ENCODE measurements at regions of chr15 and their contacts with region 1.

Region 1: DNA sequence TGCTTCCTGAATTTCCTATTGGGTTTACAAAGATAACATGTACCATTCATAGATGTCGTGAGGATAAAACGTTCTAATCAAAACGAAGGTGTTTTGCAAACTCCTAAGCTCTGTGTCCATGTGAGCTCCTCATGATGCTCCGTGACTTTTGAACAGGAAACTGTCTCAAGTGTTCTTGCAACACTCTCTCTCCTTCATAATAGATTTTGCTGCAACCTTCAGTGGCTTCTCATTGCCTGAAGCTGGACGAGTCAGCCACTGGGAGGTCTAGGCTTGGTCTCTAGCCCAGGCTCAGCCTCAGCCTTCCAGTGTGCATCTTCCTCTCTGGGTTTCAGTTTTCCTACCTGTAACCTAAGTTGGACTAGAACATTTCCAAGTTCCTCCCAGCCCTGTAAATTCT is 18.7 kb upstream of the BCL2A1 start:
- DNase-seq: no peak
- ATAC-seq: no peak
- H3K4me3 ChIP-seq: no peak overlapping the region
- H3K27ac ChIP-seq: peak overlapping the region in 1 of 10 donors; percentile 52
- H3K4me1 ChIP-seq: peaks cover 0 to 20% (median 0%) of the 10 kb centered on the region in 9 donors
- H3K27me3 ChIP-seq: peaks cover 0 to 4% (median 0%) of the 10 kb centered on the region in 7 donors
- CTCF ChIP-seq: no peak

Region 2: DNA sequence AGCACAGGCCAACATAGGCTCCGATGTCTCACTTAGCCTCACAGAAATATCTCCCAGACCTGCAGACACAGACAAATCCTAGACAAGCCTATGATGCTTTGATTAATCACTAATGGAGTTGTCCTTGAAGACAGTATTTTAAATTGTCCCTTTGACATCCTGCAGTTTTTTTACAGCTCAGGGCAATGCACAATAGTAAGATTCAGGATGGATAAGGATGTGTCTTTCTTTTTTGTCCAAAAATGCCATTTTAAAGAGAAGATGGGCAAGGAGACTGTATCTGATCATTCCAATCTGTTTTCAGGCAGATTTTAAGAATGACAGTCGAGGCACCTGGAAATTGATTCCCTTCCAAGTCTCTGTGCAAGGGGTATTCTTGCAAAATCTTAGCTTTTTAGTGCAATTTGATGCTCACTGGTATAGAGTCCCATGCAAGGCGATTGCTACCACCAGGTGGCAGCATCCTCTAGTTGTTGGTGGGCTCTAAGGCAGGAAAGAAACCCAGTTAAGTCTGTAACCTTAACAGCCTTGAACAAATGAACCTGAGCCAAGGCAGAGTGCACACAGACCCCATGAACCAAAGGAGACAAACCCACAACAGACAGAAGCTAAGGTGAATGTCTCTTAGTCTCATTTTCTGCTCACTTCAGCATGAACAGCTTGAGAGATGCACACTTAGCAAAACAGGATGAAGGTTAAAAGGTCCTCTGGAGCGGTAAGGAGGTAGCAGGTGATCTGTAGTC is 608.8 kb before region 1 on chr15:
- intact Hi-C with region 1: loop called in 9 of 10 experiments (anchors 2 to 10 kb)
- DNase-seq: peak; percentile 60 to 73
- ATAC-seq: peak; percentile 73 to 89 (median 80)
- H3K4me3 ChIP-seq: no peak overlapping the region
- H3K27ac ChIP-seq: no peak overlapping the region
- H3K4me1 ChIP-seq: no peaks in the 10 kb centered on the region
- H3K27me3 ChIP-seq: no peaks in the 10 kb centered on the region
- CTCF ChIP-seq: peak; percentile 80 to 93 (median 90)

Region 3: GRCh38 chr15:79769069-79769481 is 220.6 kb before region 1 on chr15:
- intact Hi-C with region 1: loop called in 1 of 10 experiments (anchors 10 kb)
- DNase-seq: no peak
- ATAC-seq: no peak
- H3K4me3 ChIP-seq: no peak overlapping the region
- H3K27ac ChIP-seq: no peak overlapping the region
- H3K4me1 ChIP-seq: no peaks in the 10 kb centered on the region
- H3K27me3 ChIP-seq: peaks cover 0 to 8% (median 0%) of the 10 kb centered on the region in 7 donors
- CTCF ChIP-seq: peak in 6 of 9 donors; percentile 17 to 39 (median 32)

Region 4: GRCh38 chr15:79853458-79854328 is 136.0 kb before region 1 on chr15:
- intact Hi-C with region 1: no loop called
- DNase-seq: peak; percentile 14 to 48
- ATAC-seq: peak; percentile 61 to 91 (median 85)
- H3K4me3 ChIP-seq: no peak overlapping the region
- H3K27ac ChIP-seq: no peak overlapping the region
- H3K4me1 ChIP-seq: no peaks in the 10 kb centered on the region
- H3K27me3 ChIP-seq: no peaks in the 10 kb centered on the region
- CTCF ChIP-seq: peak; percentile 80 to 97 (median 93)

Region 5: GRCh38 chr15:79896637-79897379 is 92.9 kb before region 1 on chr15 and contains the start of gene MTHFS:
- intact Hi-C with region 1: loop called in 5 of 10 experiments (anchors 2 to 10 kb)
- DNase-seq: peak; percentile 75 to 82
- ATAC-seq: peak; percentile 96 to 99 (median 97)
- H3K4me3 ChIP-seq: peak within 1 kb of the TSS; percentile 52 to 95 (median 79)
- H3K27ac ChIP-seq: peak within 1 kb of the TSS; percentile 77 to 99 (median 96)
- H3K4me1 ChIP-seq: peaks cover 0 to 39% (median 7%) of the 10 kb centered on the region in 9 donors
- H3K27me3 ChIP-seq: no peaks in the 10 kb centered on the region
- CTCF ChIP-seq: peak in 8 of 9 donors; percentile 42 to 73 (median 60)
- total RNA-seq, gene MTHFS: 10.1 to 25.6 (median 19.3) TPM

Region 6: DNA sequence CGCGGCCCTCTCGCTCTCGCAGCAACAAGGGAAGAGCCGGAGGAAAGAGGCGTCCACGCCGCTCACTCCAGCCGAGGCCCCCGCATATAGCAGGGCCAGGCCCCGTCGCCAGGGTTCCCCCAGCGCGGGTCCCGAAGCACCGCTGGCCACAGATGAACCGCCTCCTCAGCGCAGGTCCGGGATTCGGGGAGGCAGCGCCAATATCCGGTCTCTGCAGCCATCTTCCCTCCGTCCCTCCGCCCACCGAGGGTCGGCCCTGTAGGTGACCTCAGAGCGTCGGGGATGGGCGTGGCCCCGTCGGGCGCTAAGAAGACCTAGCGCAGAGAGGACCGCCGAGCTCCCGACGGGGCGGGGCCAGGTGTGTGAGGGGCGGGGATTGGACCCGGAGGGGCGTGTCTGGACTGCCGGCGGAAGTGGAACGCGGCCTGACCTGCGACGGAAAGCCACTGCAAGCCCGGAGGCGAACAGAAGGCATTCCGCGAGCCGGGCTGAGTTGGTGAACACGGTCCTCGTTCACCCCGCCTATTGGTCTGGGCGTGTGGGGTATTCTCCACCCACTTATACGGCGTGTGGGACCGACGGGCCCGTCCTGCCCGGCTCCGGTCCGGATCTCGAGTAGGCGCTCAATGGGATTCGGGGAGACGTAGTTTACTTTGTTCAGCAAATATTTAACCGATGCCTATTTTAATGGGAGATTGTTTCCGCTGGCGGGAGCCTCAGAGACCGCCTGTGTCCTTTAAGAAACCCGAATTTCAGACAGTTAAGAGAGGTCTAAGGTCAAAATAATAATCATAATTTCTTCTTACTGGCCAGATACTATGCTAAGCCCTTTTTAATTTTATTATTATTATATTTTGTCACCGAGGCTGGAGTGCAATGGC is 65.9 kb before region 1 on chr15:
- intact Hi-C with region 1: loop called in 1 of 10 experiments (anchors 2 kb)
- DNase-seq: peak; percentile 92 to 94
- ATAC-seq: peak; percentile 98 to 100 (median 99)
- H3K4me3 ChIP-seq: peak overlapping the region; percentile 66 to 99 (median 87)
- H3K27ac ChIP-seq: peak overlapping the region; percentile 50 to 98 (median 94)
- H3K4me1 ChIP-seq: peaks cover 0 to 16% (median 9%) of the 10 kb centered on the region in 9 donors
- H3K27me3 ChIP-seq: no peaks in the 10 kb centered on the region
- CTCF ChIP-seq: no peak

Region 7: DNA sequence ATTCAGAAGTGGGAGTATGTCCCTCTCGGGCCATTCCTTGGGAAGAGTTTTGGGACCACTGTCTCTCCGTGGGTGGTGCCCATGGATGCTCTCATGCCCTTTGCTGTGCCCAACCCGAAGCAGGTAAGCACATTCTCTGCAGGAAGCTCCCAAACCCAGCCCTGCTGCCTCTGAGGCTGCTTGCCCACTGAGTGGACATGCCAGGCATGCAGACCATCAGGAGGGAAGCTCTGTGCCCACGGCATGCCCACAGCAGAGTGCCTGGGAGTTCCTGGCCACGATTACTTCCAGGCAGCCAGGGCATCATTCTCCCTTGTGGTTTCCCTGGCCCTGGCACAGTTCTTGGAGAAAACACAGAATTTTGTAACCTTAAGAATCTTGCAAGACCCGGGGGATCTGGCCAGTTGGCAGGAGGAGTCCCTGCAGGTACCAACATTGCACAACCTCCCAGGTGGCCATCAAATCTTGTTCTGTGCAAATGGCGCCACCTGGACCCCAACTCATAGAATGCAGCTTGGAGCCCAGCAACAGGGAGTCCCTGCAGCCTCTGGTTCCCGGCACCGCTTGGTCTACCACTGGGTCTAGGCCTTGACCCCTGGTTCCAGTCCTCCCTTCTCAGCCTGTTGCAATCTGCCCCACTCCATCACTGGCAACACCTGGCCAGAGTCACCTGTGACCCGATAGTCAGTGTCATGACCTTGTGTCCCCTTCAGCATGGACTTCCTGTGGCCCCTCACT is 183.5 kb after region 1 on chr15:
- intact Hi-C with region 1: loop called in 2 of 10 experiments (anchors 10 kb)
- DNase-seq: peak; percentile 47 to 53
- ATAC-seq: peak; percentile 33 to 85 (median 74)
- H3K4me3 ChIP-seq: no peak overlapping the region
- H3K27ac ChIP-seq: no peak overlapping the region
- H3K4me1 ChIP-seq: peaks cover 0 to 15% (median 3%) of the 10 kb centered on the region in 9 donors
- H3K27me3 ChIP-seq: no peaks in the 10 kb centered on the region
- CTCF ChIP-seq: peak; percentile 52 to 75 (median 68)

Measured in heart right ventricle (tissue), 16 donors.